Activated T-helper 2 cell treated with anti-CD3 and anti-CD28 coated beads, Interferon-gamma antibody, Interleukin-2, Interleukin-4, amounts not matched to agents 10 μg/mL and 5 μg/mL and 100 μg/mL, durations not matched to agents 14 hours and 24 hours and 36 hours (primary cell): ENCODE measurements at regions of chr2 and their contacts with region 1.

Region 1: DNA sequence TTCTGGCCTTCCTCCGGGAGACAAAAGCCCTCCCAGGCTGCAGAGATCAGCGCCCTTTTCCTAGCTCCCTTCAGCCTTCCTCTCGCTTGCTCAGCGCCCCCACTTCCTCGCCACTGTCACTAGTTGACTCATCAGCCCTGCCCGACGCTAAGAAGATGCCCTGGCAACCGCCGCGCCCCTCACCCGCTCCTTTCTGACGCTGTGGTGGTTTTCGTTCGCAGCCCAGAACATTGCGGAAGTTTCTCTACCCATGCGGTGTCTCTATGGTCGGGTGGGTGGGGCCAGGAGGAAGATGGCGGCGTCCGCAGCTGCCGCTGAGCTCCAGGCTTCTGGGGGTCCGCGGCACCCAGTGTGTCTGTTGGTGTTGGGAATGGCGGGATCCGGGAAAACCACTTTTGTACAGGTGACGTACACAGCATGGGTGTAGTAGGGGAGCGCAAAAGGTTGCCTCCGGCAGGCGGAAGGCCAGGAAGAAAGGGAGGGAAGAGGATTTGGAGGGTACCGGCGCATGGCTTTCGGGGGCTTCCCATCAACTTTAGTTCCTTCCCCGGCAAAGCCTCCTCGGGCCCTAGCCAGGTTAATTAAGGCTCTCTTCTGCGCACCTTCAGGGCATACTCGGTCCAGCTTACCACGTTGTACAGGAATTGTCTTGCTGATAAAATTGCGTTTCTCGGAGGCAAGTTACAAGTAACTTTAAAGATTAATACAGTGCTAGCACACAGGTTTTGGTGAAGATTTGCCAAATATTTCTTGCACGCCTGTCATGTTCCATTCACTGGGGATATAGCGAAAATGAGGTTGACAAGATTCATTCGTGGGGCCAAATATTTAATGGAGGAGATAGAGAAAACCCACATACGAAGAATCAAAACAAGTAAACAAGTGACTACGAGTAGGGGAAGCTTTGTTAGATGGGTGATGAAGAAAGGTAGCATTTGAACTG is at the starts of genes CCDC121 and GPN1:
- DNase-seq: peak; percentile 95
- H3K4me3 Mint-ChIP-seq: no peak within 1 kb of the TSS
- H3K27ac Mint-ChIP-seq: peak within 1 kb of the TSS; percentile 38
- H3K4me1 Mint-ChIP-seq: peaks cover 29% of the 10 kb centered on the region
- H3K27me3 Mint-ChIP-seq: no peaks in the 10 kb centered on the region
- total RNA-seq, gene CCDC121: 0.57 and 0.73 TPM in 2 replicates
- total RNA-seq, gene GPN1: 54.3 and 55.9 TPM in 2 replicates

Region 2: GRCh38 chr2:27489498-27490397 is 139.3 kb before region 1 on chr2 and contains the start of gene IFT172:
- intact Hi-C with region 1: loop called (anchors 2 kb)
- DNase-seq: peak; percentile 99
- H3K4me3 Mint-ChIP-seq: peak within 1 kb of the TSS; percentile 86
- H3K27ac Mint-ChIP-seq: peak within 1 kb of the TSS; percentile 74
- H3K4me1 Mint-ChIP-seq: peaks cover 19% of the 10 kb centered on the region
- H3K27me3 Mint-ChIP-seq: peaks cover 13% of the 10 kb centered on the region
- total RNA-seq, gene IFT172: 16.4 and 18.8 TPM in 2 replicates

Region 3: GRCh38 chr2:27683390-27684071 is 54.5 kb after region 1 on chr2:
- intact Hi-C with region 1: no loop called
- DNase-seq: peak; percentile 78
- H3K4me3 Mint-ChIP-seq: no peak overlapping the region
- H3K27ac Mint-ChIP-seq: peak overlapping the region; percentile 77
- H3K4me1 Mint-ChIP-seq: peaks cover 31% of the 10 kb centered on the region
- H3K27me3 Mint-ChIP-seq: no peaks in the 10 kb centered on the region